Brain microvascular endothelial cell (primary cell): ENCODE measurements at regions of chr2 and their contacts with region 1.

Region 1: GRCh38 chr2:42314892-42315467 is 46.0 kb downstream of the COX7A2L start:
- DNase-seq: peak; percentile 84
- H3K4me3 ChIP-seq: no peak overlapping the region
- H3K27ac ChIP-seq: peak overlapping the region; percentile 88
- H3K27me3 ChIP-seq: no peaks in the 10 kb centered on the region
- CTCF ChIP-seq: no peak

Region 2: GRCh38 chr2:42102024-42102590 is 212.9 kb before region 1 on chr2:
- in situ Hi-C with region 1: loop called (anchors 25 kb)
- DNase-seq: peak; percentile 85
- H3K4me3 ChIP-seq: peak overlapping the region; percentile 26
- H3K27ac ChIP-seq: peak overlapping the region; percentile 92
- H3K27me3 ChIP-seq: no peaks in the 10 kb centered on the region
- CTCF ChIP-seq: no peak

Region 3: GRCh38 chr2:42386684-42387083 is 71.7 kb after region 1 on chr2:
- in situ Hi-C with region 1: no loop called
- DNase-seq: no peak
- H3K4me3 ChIP-seq: no peak overlapping the region
- H3K27ac ChIP-seq: no peak overlapping the region
- H3K27me3 ChIP-seq: no peaks in the 10 kb centered on the region
- CTCF ChIP-seq: peak; percentile 57

Region 4: GRCh38 chr2:42435641-42436040 is 120.7 kb after region 1 on chr2:
- in situ Hi-C with region 1: no loop called
- DNase-seq: no peak
- H3K4me3 ChIP-seq: no peak overlapping the region
- H3K27ac ChIP-seq: no peak overlapping the region
- H3K27me3 ChIP-seq: no peaks in the 10 kb centered on the region
- CTCF ChIP-seq: no peak

Region 5: DNA sequence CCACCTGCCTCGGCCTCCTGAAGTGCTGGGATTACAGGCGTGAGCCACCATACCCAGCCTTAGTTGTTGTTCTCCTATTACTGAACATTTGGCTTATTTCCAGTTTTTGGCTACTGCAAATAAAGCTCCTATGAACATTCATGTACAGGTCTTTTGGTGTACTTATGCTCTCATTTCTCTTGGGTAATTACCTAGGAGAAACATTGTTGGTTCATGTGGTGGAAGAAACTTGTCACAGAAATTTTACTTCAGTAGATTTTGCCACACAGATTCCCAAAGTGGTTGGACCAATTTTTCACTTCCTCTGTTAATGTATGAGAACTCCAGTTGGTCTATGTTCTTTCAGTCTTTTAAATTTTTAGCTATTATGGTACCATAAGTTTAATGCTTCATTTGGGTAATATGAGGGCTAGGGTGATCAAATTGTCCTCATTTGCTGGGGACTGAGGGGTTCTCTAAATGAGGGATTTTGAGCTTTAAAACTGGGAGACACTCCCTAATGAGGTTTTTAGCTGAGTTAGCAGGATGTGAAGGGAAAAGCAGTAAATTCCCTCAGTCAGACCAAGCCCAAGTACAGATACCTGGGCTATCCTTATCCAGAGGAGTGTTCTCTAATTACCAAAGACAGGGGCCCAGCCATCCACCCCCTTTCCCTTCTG is 287.4 kb after region 1 on chr2:
- in situ Hi-C with region 1: no loop called
- DNase-seq: no peak
- H3K4me3 ChIP-seq: no peak overlapping the region
- H3K27ac ChIP-seq: no peak overlapping the region
- H3K27me3 ChIP-seq: no peaks in the 10 kb centered on the region
- CTCF ChIP-seq: no peak